GM12878 (cell line): ENCODE measurements at regions of chr1 and their contacts with region 1.

Region 1: GRCh38 chr1:32400876-32401631 is 6.8 kb upstream of the BSDC1 start:
- DNase-seq: no peak
- ATAC-seq: peak; percentile 95
- H3K4me3 ChIP-seq: no peak overlapping the region
- H3K27ac ChIP-seq: no peak overlapping the region
- H3K4me1 ChIP-seq: no peaks in the 10 kb centered on the region
- H3K27me3 ChIP-seq: no peaks in the 10 kb centered on the region
- CTCF ChIP-seq: peak; percentile 87 to 94 (median 88)
- EP300 ChIP-seq: no peak
- POLR2A ChIP-seq: no peak
- RAD21 ChIP-seq: peak; percentile 81

Region 2: GRCh38 chr1:32072622-32073298 is 328.3 kb before region 1 on chr1 and contains the start of gene TMEM39B:
- CTCF ChIA-PET with region 1: no interaction called
- POLR2A ChIA-PET with region 1: no interaction called
- RAD21 ChIA-PET with region 1: no interaction called
- SMC1A ChIA-PET with region 1: no interaction called
- in situ Hi-C with region 1: no loop called
- intact Hi-C with region 1: no loop called
- DNase-seq: peak; percentile 72
- ATAC-seq: peak; percentile 92
- H3K4me3 ChIP-seq: peak within 1 kb of the TSS; percentile 92
- H3K27ac ChIP-seq: peak within 1 kb of the TSS; percentile 70
- H3K4me1 ChIP-seq: peaks cover 13% of the 10 kb centered on the region
- H3K27me3 ChIP-seq: no peaks in the 10 kb centered on the region
- CTCF ChIP-seq: no peak
- EP300 ChIP-seq: peak in 1 of 2 experiments; percentile 45; a peak in 2 of 4 replicates
- POLR2A ChIP-seq: peak; percentile 96
- RAD21 ChIP-seq: no peak
- polyA plus RNA-seq, gene TMEM39B: 2.3 to 3.4 TPM

Region 3: DNA sequence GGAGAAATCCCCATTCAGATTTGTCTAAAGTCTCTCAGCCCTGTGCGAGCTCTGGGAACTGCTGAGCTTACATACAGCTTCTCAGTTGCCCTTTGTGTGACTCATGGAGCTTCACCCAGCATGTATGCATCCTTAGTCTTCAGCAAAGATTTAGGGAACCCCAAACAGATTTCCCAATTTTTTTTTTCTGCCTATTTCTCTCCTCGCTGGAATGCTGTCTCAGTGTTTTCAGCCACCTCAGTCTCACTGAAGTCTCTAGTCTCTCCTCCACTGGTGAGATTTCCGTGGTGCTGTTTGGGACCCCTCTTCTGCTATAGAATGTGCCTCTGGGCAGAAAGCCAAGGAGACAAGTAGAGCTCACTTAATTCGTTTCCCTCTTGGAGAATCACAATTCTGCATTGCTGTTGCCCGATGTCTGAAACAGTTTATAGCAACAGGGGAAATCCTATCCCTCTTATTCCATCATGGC is 249.7 kb before region 1 on chr1:
- CTCF ChIA-PET with region 1: no interaction called
- POLR2A ChIA-PET with region 1: interaction called, 10 read pairs
- RAD21 ChIA-PET with region 1: no interaction called
- SMC1A ChIA-PET with region 1: no interaction called
- in situ Hi-C with region 1: no loop called
- intact Hi-C with region 1: no loop called
- DNase-seq: no peak
- ATAC-seq: no peak
- H3K4me3 ChIP-seq: no peak overlapping the region
- H3K27ac ChIP-seq: no peak overlapping the region
- H3K4me1 ChIP-seq: no peaks in the 10 kb centered on the region
- H3K27me3 ChIP-seq: no peaks in the 10 kb centered on the region
- CTCF ChIP-seq: no peak
- EP300 ChIP-seq: no peak
- POLR2A ChIP-seq: no peak
- RAD21 ChIP-seq: no peak

Region 4: GRCh38 chr1:32413507-32414185 is 12.6 kb after region 1 on chr1:
- CTCF ChIA-PET with region 1: interaction called, 87 read pairs
- POLR2A ChIA-PET with region 1: interaction called, 8 read pairs
- RAD21 ChIA-PET with region 1: interaction called, 3 read pairs
- SMC1A ChIA-PET with region 1: interaction called, 14 read pairs
- in situ Hi-C with region 1: no loop called
- intact Hi-C with region 1: no loop called
- DNase-seq: peak; percentile 48
- ATAC-seq: peak; percentile 99
- H3K4me3 ChIP-seq: no peak overlapping the region
- H3K27ac ChIP-seq: no peak overlapping the region
- H3K4me1 ChIP-seq: no peaks in the 10 kb centered on the region; the same call in 1 of the 2 replicates
- H3K27me3 ChIP-seq: no peaks in the 10 kb centered on the region; a peak in 1 of 4 replicates
- CTCF ChIP-seq: peak; percentile 76 to 82 (median 78)
- EP300 ChIP-seq: no peak
- POLR2A ChIP-seq: no peak
- RAD21 ChIP-seq: peak; percentile 86

Region 5: GRCh38 chr1:32426489-32427255 is 25.6 kb after region 1 on chr1:
- CTCF ChIA-PET with region 1: interaction called, 17 read pairs
- POLR2A ChIA-PET with region 1: no interaction called
- RAD21 ChIA-PET with region 1: no interaction called
- SMC1A ChIA-PET with region 1: no interaction called
- in situ Hi-C with region 1: no loop called
- intact Hi-C with region 1: no loop called
- DNase-seq: no peak
- ATAC-seq: no peak
- H3K4me3 ChIP-seq: no peak overlapping the region
- H3K27ac ChIP-seq: no peak overlapping the region
- H3K4me1 ChIP-seq: peaks cover under 1% of the 10 kb centered on the region
- H3K27me3 ChIP-seq: peaks cover 0 to 10% of the 10 kb centered on the region in 2 experiments; a peak in 2 of 4 replicates
- CTCF ChIP-seq: no peak
- EP300 ChIP-seq: no peak
- POLR2A ChIP-seq: no peak
- RAD21 ChIP-seq: no peak

Region 6: DNA sequence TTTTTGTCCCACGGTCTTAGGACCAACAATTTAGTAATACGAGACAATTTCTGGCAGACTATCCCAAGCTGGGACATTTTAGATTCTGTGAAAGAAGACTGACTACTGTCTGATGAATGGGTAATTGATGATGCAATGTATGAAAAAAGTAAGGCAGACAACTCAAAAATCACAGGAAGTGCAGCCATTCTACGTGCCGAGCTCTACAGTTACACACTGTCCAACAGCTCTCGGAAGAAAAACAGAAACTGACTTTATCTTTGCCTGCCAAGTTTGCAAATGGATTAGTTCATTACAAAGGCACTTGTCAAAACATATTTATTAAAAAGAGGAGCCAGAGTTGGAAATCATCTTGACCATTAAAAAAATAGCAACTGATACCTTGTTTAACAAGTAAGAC is 95.1 kb after region 1 on chr1:
- CTCF ChIA-PET with region 1: no interaction called
- POLR2A ChIA-PET with region 1: no interaction called
- RAD21 ChIA-PET with region 1: no interaction called
- SMC1A ChIA-PET with region 1: no interaction called
- in situ Hi-C with region 1: no loop called
- intact Hi-C with region 1: loop called (anchors 5 kb)
- DNase-seq: no peak
- ATAC-seq: no peak
- H3K4me3 ChIP-seq: no peak overlapping the region
- H3K27ac ChIP-seq: no peak overlapping the region
- H3K4me1 ChIP-seq: no peaks in the 10 kb centered on the region; the same call in 1 of the 2 replicates
- H3K27me3 ChIP-seq: no peaks in the 10 kb centered on the region
- CTCF ChIP-seq: no peak
- EP300 ChIP-seq: no peak
- POLR2A ChIP-seq: no peak
- RAD21 ChIP-seq: no peak

Region 7: GRCh38 chr1:32801096-32801715 is 400.2 kb after region 1 on chr1:
- CTCF ChIA-PET with region 1: no interaction called
- POLR2A ChIA-PET with region 1: no interaction called
- RAD21 ChIA-PET with region 1: no interaction called
- SMC1A ChIA-PET with region 1: no interaction called
- in situ Hi-C with region 1: no loop called
- intact Hi-C with region 1: no loop called
- DNase-seq: no peak
- ATAC-seq: no peak
- H3K4me3 ChIP-seq: no peak overlapping the region
- H3K27ac ChIP-seq: no peak overlapping the region
- H3K4me1 ChIP-seq: peaks cover 9% of the 10 kb centered on the region; the same call in 1 of the 2 replicates
- H3K27me3 ChIP-seq: no peaks in the 10 kb centered on the region
- CTCF ChIP-seq: no peak
- EP300 ChIP-seq: no peak
- POLR2A ChIP-seq: no peak
- RAD21 ChIP-seq: no peak